ENCODE measurements at regions of chr2 and their contacts with region 1.

Region 1: GRCh38 chr2:227817850-227818674 is 4.4 kb downstream of the CCL20 start:
- DNase-seq: peak; percentile 13
- H3K4me3 Mint-ChIP-seq: no peak overlapping the region
- H3K27ac Mint-ChIP-seq: peak overlapping the region; percentile 71
- H3K4me1 Mint-ChIP-seq: peaks cover 16% of the 10 kb centered on the region
- H3K27me3 Mint-ChIP-seq: peaks cover 4% of the 10 kb centered on the region

Region 2: DNA sequence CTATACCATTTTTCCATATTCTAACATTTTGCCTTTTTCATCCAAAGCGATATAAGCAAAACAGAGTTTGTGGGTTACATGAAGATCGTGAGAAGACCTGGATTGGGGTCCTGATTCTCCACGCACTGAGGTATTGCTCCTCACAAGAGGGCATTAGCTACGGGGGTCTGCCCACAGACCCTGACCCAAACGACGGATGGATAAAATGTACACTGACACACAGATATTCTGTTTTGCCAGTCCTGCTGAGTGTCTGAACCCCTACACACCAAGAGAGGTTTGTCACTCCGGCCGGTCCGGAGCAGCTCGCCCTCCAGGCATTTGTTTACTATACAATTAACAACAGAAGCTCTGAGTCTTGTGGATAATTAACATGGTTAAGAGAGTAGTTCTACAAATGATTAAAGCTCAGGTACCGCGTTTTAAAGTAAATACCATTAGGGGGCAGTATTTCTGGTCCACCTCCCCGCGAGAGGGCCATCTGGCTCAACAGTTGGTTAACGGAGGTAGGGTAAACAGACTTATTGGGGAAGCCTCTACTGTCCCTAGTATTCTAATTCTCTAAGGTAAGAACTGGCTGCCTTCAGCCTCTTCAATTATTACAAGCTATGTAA is 43.9 kb before region 1 on chr2:
- intact Hi-C with region 1: loop called (anchors 2 kb)
- DNase-seq: no peak
- H3K4me3 Mint-ChIP-seq: no peak overlapping the region
- H3K27ac Mint-ChIP-seq: no peak overlapping the region
- H3K4me1 Mint-ChIP-seq: peaks cover 10% of the 10 kb centered on the region
- H3K27me3 Mint-ChIP-seq: no peaks in the 10 kb centered on the region

Region 3: GRCh38 chr2:227783404-227784138 is 34.5 kb before region 1 on chr2:
- intact Hi-C with region 1: loop called (anchors 2 kb)
- DNase-seq: no peak
- H3K4me3 Mint-ChIP-seq: peak overlapping the region; percentile 22
- H3K27ac Mint-ChIP-seq: peak overlapping the region; percentile 19
- H3K4me1 Mint-ChIP-seq: peaks cover 12% of the 10 kb centered on the region
- H3K27me3 Mint-ChIP-seq: no peaks in the 10 kb centered on the region

Region 4: GRCh38 chr2:227805578-227805977 is 12.5 kb before region 1 on chr2:
- intact Hi-C with region 1: loop called (anchors 1 kb)
- DNase-seq: no peak
- H3K4me3 Mint-ChIP-seq: peak overlapping the region; percentile 55
- H3K27ac Mint-ChIP-seq: peak overlapping the region; percentile 78
- H3K4me1 Mint-ChIP-seq: peaks cover 5% of the 10 kb centered on the region
- H3K27me3 Mint-ChIP-seq: no peaks in the 10 kb centered on the region